ENCODE measurements at regions of chr17 and their contacts with region 1.

Region 1: DNA sequence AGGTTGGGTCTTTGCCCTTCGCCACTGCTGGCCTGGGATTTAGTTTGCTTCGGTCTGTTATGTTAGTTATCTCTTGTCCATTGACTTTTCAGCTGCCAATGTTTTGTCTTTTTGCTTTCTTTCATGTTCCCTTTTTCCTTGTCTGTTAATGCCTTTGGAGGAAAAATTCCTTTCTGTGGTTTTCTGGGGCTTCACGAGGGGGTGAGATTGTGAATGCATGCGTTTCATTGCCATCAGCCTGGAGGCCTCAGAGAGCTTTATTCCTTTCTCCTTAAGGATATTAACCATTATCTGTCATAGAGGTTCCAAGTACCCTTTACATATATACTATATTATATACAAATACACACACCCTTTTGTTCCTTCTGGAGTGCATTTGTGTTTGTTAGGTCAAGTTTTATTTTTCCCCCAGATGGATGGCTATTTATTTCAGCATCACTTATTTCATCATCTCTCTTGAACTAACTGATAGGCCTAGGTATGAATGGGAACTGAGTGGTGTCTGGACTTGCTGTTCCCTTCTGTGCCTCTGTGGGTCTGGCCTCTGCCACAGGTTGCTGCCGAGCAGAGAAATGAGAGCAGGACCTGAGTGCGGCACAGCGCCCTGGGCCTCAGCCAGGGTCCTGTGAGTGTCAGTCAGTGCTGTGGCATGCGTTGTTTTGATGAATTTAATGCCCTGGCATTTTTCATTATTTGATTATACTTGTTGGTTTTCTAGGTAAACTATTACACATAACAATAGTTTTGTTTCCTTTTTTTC is 193.4 kb downstream of the LGALS9B start:
- DNase-seq: no peak
- ATAC-seq: peak; percentile 46 to 62
- H3K4me3 Mint-ChIP-seq: peak overlapping the region; percentile 8 to 88 (median 68)
- H3K27ac Mint-ChIP-seq: peak overlapping the region; percentile 80 to 95 (median 91)
- H3K4me1 Mint-ChIP-seq: peaks cover 62 to 96% (median 91%) of the 10 kb centered on the region in 4 donors
- H3K27me3 Mint-ChIP-seq: no peaks in the 10 kb centered on the region

Region 2: DNA sequence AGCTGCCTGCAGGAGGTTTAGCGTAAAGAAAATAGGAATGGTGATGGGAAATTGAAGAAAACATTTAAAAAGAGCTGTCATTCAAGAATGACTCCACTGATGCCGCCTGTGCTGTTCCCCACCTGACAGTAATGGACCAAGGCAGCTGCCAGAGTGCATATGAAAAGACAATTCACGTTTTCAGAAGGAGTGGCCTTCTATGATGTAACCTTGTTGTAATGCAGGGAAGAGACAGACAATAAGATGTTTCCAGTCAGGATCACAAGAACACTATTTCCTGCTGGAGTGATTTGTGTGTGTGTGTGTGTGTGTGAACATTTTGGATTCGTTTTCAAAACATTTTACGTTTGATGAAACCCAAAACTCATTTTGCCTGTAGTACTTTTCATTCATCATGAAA is 10.3 kb before region 1 on chr17:
- POLR2A ChIA-PET with region 1: interaction called, 17 read pairs
- DNase-seq: no peak
- ATAC-seq: no peak
- H3K4me3 Mint-ChIP-seq: peak overlapping the region in 3 of 10 donors; percentile 10 to 36 (median 34)
- H3K27ac Mint-ChIP-seq: peak overlapping the region in 9 of 10 donors; percentile 50 to 94 (median 76)
- H3K4me1 Mint-ChIP-seq: peaks cover 34 to 77% (median 67%) of the 10 kb centered on the region in 4 donors
- H3K27me3 Mint-ChIP-seq: no peaks in the 10 kb centered on the region

Region 3: DNA sequence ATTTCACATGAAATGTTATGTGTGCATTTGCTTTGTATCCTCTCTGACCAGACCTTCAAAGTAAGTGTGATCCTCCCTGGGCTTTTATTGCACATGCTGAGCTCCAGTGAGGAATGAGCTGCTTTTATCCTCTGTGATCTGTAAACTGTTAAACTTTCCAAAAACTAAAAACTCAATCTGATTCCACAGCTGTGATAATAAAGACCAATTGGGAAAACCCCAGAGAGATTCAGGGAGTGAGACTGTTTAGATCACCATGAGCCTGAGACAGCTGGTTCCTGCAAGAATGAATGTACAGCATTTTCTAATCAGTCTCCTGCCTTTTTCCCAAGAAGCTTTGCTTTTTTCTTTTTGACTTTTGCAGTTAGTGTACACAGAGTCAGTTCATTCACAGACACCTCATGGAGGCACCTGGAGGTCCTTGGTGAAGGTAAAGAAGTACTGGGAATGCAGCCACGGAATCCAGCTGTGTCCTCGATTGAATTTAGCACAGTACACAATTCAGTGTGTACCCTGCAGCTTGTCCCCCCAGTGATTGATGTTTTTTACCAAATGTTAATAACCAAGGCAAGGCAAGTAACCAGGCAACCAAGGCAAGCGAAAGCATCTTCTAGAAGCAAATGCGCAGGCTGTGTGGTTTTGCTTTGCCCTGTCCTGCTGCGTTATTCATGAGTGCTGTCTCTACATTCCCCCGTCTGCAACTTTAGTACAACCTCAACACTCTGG is 10.8 kb after region 1 on chr17:
- POLR2A ChIA-PET with region 1: interaction called, 14 read pairs
- DNase-seq: no peak
- ATAC-seq: no peak
- H3K4me3 Mint-ChIP-seq: no peak overlapping the region
- H3K27ac Mint-ChIP-seq: peak overlapping the region in 3 of 10 donors; percentile 31 to 51 (median 36)
- H3K4me1 Mint-ChIP-seq: peaks cover 9 to 23% (median 19%) of the 10 kb centered on the region in 4 donors
- H3K27me3 Mint-ChIP-seq: no peaks in the 10 kb centered on the region

Measured in naive thymus-derived CD8-positive, alpha-beta T cell (primary cell).